Activated T-helper 1 cell treated with anti-CD3 and anti-CD28 coated beads, Interleukin-12 subunit alpha, Interleukin-12 subunit beta, Interleukin-2, Interleukin-4 antibody, amounts not matched to agents 30 ng/mL and 10 ng/mL and 1 ng/mL, durations not matched to agents 14 hours and 24 hours and 36 hours (primary cell): ENCODE measurements at regions of chr21 and their contacts with region 1.

Region 1: GRCh38 chr21:33721081-33721480 is 78.8 kb downstream of the ITSN1 start:
- DNase-seq: no peak
- H3K4me3 Mint-ChIP-seq: no peak overlapping the region
- H3K27ac Mint-ChIP-seq: no peak overlapping the region
- H3K4me1 Mint-ChIP-seq: no peaks in the 10 kb centered on the region
- H3K27me3 Mint-ChIP-seq: peaks cover 7% of the 10 kb centered on the region

Region 2: GRCh38 chr21:33993286-33994231 is 272.5 kb after region 1 on chr21:
- intact Hi-C with region 1: loop called (anchors 5 kb)
- DNase-seq: no peak
- H3K4me3 Mint-ChIP-seq: no peak overlapping the region
- H3K27ac Mint-ChIP-seq: peak overlapping the region; percentile 10
- H3K4me1 Mint-ChIP-seq: peaks cover 23% of the 10 kb centered on the region
- H3K27me3 Mint-ChIP-seq: no peaks in the 10 kb centered on the region